ENCODE measurements at regions of chr17 and their contacts with region 1.

Region 1: DNA sequence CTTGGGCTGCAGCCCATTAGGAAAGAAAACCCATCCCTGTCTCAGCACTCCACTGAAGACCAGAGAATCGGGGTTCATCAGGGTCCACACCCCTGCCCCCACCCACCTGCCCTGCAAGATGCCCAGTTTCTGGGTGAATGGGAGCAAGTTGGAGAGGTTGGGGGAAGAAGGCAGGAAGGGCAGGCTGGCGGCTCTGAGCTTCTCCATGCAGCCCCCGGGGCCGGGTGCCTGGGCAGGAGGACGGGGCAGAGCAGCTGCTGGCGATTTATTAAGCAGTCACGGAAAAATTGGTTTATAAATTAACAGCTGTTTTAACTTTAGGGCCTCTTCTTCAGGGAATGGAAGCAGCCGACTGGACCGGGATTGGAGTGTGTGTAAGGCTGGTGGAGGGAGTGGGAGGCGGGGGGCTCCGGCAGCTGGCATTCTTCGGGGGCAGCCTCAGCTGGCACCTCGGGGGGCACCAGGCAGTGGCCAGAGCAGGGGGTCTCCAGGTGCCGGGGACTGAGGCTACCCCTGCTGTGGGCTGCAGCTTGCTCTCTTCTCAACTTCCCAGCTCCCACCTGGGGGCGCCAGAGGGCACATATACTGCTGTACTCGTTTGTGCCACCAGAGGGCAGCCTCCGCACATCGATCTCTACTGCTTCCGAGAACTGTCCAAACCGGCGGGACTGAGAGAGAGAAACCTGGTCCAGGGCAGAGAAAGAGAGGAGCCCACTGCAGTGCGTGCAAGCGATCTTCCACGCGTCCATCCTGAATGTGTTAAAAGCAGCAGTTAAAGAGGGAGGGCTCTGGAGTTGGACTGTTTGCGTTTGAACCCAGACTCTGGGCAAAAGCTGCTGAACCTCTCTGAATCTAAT is 5.0 kb upstream of the PPP1R1B start:
- DNase-seq: peak; percentile 92 to 93
- ATAC-seq: peak; percentile 86 to 97 (median 87)
- H3K4me3 ChIP-seq: no peak overlapping the region
- H3K4me3 Mint-ChIP-seq: peak overlapping the region; percentile 57
- H3K27ac ChIP-seq: peak overlapping the region; percentile 5
- H3K27ac Mint-ChIP-seq: peak overlapping the region in 1 of 2 donors; percentile 36
- H3K4me1 ChIP-seq: peaks cover 38% of the 10 kb centered on the region
- H3K4me1 Mint-ChIP-seq: peaks cover 23 to 38% of the 10 kb centered on the region in 2 donors
- H3K27me3 ChIP-seq: peaks cover 9% of the 10 kb centered on the region
- H3K27me3 Mint-ChIP-seq: peaks cover 10 to 21% of the 10 kb centered on the region in 2 donors
- CTCF ChIP-seq: peak; percentile 100

Region 2: GRCh38 chr17:39547713-39548478 is 73.9 kb before region 1 on chr17:
- intact Hi-C with region 1: loop called (anchors 2 kb)
- DNase-seq: peak; percentile 75 to 82
- ATAC-seq: peak; percentile 70 to 88 (median 85)
- H3K4me3 ChIP-seq: no peak overlapping the region
- H3K4me3 Mint-ChIP-seq: no peak overlapping the region
- H3K27ac ChIP-seq: no peak overlapping the region
- H3K27ac Mint-ChIP-seq: no peak overlapping the region
- H3K4me1 ChIP-seq: no peaks in the 10 kb centered on the region
- H3K4me1 Mint-ChIP-seq: no peaks in the 10 kb centered on the region
- H3K27me3 ChIP-seq: no peaks in the 10 kb centered on the region
- H3K27me3 Mint-ChIP-seq: no peaks in the 10 kb centered on the region
- CTCF ChIP-seq: peak; percentile 96

Region 3: DNA sequence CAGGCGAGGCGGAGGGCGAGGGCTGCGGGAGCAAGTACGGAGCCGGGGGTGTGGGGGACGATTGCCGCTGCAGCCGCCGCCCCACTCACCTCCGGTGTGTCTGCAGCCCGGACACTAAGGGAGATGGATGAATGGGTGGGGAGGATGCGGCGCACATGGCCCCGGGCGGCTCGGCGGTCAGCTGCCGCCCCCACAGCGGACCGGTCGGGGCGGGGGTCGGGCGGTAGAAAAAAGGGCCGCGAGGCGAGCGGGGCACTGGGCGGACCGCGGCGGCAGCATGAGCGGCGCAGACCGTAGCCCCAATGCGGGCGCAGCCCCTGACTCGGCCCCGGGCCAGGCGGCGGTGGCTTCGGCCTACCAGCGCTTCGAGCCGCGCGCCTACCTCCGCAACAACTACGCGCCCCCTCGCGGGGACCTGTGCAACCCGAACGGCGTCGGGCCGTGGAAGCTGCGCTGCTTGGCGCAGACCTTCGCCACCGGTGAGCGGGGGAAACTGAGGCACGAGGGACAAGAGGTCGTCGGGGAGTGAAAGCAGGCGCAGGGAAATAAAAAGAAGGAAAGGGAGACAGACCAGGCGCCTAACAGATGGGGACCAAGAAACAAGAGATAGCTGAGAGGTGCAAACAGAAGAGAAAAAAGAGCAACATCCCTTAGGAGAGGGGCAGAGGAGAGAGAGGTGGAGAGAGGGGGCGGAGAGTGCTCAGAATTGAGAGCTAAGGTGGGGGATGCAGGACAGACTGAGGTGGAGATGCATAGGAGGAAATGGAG is 46.6 kb after region 1 on chr17 and contains the start of gene PNMT:
- intact Hi-C with region 1: loop called (anchors 5 kb)
- DNase-seq: peak; percentile 63 to 86
- ATAC-seq: peak; percentile 76 to 87 (median 83)
- H3K4me3 ChIP-seq: peak within 1 kb of the TSS; percentile 23
- H3K4me3 Mint-ChIP-seq: peak within 1 kb of the TSS; percentile 78
- H3K27ac ChIP-seq: no peak within 1 kb of the TSS
- H3K27ac Mint-ChIP-seq: peak within 1 kb of the TSS in 1 of 2 donors; percentile 44
- H3K4me1 ChIP-seq: peaks cover 23% of the 10 kb centered on the region
- H3K4me1 Mint-ChIP-seq: peaks cover 7 to 31% of the 10 kb centered on the region in 2 donors
- H3K27me3 ChIP-seq: peaks cover 5% of the 10 kb centered on the region
- H3K27me3 Mint-ChIP-seq: no peaks in the 10 kb centered on the region
- CTCF ChIP-seq: peak; percentile 70
- total RNA-seq, gene PNMT: 1.2 to 2.5 (median 2.2) TPM

Region 4: GRCh38 chr17:39863918-39864746 is 242.4 kb after region 1 on chr17 and contains the start of gene IKZF3:
- intact Hi-C with region 1: loop called (anchors 1 kb)
- DNase-seq: peak; percentile 81 to 95
- ATAC-seq: peak; percentile 89 to 94 (median 92)
- H3K4me3 ChIP-seq: peak within 1 kb of the TSS; percentile 95
- H3K4me3 Mint-ChIP-seq: peak within 1 kb of the TSS; percentile 98
- H3K27ac ChIP-seq: peak within 1 kb of the TSS; percentile 97
- H3K27ac Mint-ChIP-seq: peak within 1 kb of the TSS; percentile 91 to 99
- H3K4me1 ChIP-seq: peaks cover 24% of the 10 kb centered on the region
- H3K4me1 Mint-ChIP-seq: peaks cover 52 to 57% of the 10 kb centered on the region in 2 donors
- H3K27me3 ChIP-seq: peaks cover 3% of the 10 kb centered on the region
- H3K27me3 Mint-ChIP-seq: peaks cover 0 to 4% of the 10 kb centered on the region in 2 donors
- CTCF ChIP-seq: peak; percentile 49
- total RNA-seq, gene IKZF3: 134 to 162 (median 139) TPM

Region 5: GRCh38 chr17:40026816-40027613 is 405.3 kb after region 1 on chr17:
- intact Hi-C with region 1: loop called (anchors 1 kb)
- DNase-seq: peak; percentile 71 to 91
- ATAC-seq: peak; percentile 87 to 97 (median 93)
- H3K4me3 ChIP-seq: no peak overlapping the region
- H3K4me3 Mint-ChIP-seq: no peak overlapping the region
- H3K27ac ChIP-seq: no peak overlapping the region
- H3K27ac Mint-ChIP-seq: no peak overlapping the region
- H3K4me1 ChIP-seq: peaks cover 17% of the 10 kb centered on the region
- H3K4me1 Mint-ChIP-seq: peaks cover 11 to 14% of the 10 kb centered on the region in 2 donors
- H3K27me3 ChIP-seq: no peaks in the 10 kb centered on the region
- H3K27me3 Mint-ChIP-seq: no peaks in the 10 kb centered on the region
- CTCF ChIP-seq: peak; percentile 94

Measured in natural killer cell (primary cell).